ENCODE measurements at regions of chr19 and their contacts with region 1.

Region 1: GRCh38 chr19:57362997-57363705 is at the starts of genes TRAPPC2B and ZNF547:
- DNase-seq: peak; percentile 98
- H3K4me3 Mint-ChIP-seq: peak within 1 kb of the TSS; percentile 82
- H3K27ac Mint-ChIP-seq: peak within 1 kb of the TSS; percentile 96
- H3K4me1 Mint-ChIP-seq: peaks cover 12% of the 10 kb centered on the region
- H3K27me3 Mint-ChIP-seq: no peaks in the 10 kb centered on the region
- total RNA-seq, gene TRAPPC2B: 3.8 and 4.1 TPM in 2 replicates
- total RNA-seq, gene ZNF547: 1.3 and 2.0 TPM in 2 replicates

Region 2: DNA sequence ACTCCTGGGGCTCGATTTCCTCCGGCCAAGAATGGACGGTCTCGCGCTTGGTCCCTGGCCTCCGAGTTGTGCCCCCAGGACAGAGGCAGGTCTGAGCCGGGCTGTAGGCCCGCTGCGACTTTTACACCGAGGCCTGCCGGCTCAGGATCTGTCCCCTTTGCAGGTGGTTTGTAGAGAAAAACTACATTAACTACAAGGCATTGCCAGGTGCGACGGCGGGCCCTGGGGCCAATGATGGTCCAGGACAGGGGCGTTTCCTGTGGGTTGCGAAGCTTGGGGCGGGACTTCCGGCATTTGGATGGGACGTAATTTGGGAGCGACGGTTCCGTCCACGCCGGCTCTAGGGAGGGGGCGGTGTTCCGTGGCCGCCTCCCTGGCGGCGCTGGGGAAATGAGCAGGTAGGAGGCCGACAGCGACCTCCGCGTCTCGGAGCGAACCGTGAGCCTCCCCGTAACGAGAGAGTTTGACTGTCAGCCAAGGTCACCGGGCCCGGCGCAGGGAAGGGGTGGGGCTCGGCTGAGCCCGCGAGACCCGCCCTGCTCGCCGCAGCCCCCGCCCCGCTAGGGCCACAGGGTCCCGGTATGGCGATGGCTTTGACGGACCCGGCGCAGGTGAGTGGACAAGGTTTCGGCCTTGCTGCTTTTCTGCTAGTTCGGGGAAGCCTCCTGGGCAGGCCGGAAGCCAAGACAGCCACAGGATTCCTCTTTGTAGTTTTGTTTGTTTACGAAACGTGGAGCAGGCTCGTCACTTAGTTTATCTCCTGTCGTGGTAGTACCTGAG is 122.7 kb before region 1 on chr19 and contains the start of gene ZNF805:
- intact Hi-C with region 1: loop called (anchors 1 kb)
- DNase-seq: peak; percentile 93
- H3K4me3 Mint-ChIP-seq: peak within 1 kb of the TSS; percentile 92
- H3K27ac Mint-ChIP-seq: peak within 1 kb of the TSS; percentile 90
- H3K4me1 Mint-ChIP-seq: peaks cover 16% of the 10 kb centered on the region
- H3K27me3 Mint-ChIP-seq: no peaks in the 10 kb centered on the region
- total RNA-seq, gene ZNF805: 6.6 and 6.9 TPM in 2 replicates

Region 3: DNA sequence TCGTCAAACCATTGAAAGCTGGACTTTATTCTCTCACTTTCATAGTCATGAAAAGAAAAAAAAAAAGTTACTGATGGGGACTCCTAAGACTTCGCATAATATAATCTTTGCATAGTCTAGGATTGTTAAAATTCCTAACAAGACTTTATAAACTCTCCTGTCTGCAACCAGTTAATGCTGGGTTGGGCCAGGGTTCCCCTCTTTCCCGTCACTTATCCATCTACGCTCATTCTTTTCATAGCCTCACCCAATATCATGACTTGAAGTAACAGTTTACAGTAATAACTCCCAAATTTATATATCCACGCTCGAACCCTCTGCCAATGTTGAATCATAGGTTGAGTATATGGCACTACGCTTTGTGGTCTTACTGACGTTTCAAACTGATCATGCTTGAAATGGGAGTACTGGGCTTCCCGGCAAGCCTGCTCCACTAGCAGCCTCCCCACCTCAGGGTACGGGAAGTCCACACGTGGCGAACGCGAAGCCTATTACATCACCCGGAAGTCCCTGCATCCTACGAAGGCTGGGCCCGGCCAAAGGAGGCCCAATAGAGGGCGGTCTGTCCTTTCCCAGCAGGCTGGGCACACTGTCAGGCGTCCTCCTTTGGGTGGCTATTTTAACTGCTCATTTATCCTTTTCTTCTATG is 83.6 kb before region 1 on chr19:
- intact Hi-C with region 1: loop called (anchors 1 kb)
- DNase-seq: peak; percentile 73
- H3K4me3 Mint-ChIP-seq: peak overlapping the region; percentile 15
- H3K27ac Mint-ChIP-seq: no peak overlapping the region
- H3K4me1 Mint-ChIP-seq: peaks cover 21% of the 10 kb centered on the region
- H3K27me3 Mint-ChIP-seq: no peaks in the 10 kb centered on the region

Region 4: DNA sequence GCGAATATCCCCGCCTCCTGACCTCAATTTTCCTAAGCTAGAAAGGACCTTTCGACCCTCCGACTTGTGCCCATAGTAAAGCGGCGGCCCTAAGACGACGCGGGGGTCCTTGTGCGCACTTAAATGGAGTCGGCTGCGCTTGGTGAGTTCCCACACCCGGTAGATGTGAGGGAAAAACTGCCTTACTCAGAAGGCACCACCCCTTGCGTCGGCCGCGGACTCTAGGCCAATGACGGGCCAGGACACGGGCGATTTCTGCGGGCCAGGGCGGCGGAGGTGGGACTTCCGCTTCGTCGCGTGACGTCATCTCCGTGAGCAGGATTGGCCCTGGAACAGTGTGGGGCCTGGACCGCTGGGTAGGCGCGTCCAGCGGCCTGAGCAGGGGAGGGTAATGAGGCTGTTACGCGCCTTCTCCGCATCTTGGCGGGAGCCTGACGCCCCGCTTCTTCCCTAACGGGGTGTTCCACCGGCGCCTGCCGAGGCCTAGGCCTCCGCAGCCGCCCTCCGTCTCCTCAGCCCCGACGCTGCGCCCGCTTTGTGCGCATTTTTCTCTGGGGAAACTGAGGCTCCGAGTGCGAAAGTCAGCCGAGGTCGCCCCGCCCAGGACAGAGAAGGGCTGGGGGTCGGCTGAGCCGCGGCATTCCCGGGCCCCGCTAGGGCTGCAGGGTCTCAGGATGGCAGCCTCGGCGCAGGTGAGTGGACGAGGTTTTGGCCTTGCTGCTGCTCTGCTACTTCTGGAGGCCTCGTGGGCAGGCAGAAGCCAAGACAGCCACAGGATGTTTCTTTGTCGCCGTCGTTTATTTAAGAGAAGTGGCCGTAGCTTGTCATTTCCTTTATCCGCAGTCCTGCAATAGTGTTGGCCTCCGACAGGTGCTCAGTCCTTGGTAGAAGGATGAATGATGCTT is 42.7 kb before region 1 on chr19 and contains the start of gene ZNF543:
- intact Hi-C with region 1: loop called (anchors 2 kb)
- DNase-seq: peak; percentile 89
- H3K4me3 Mint-ChIP-seq: peak within 1 kb of the TSS; percentile 85
- H3K27ac Mint-ChIP-seq: peak within 1 kb of the TSS; percentile 91
- H3K4me1 Mint-ChIP-seq: peaks cover 25% of the 10 kb centered on the region
- H3K27me3 Mint-ChIP-seq: peaks cover 11% of the 10 kb centered on the region
- total RNA-seq, gene ZNF543: 4.6 and 5.1 TPM in 2 replicates

Region 5: GRCh38 chr19:57334191-57334590 is 29.0 kb before region 1 on chr19:
- intact Hi-C with region 1: no loop called
- DNase-seq: no peak
- H3K4me3 Mint-ChIP-seq: no peak overlapping the region
- H3K27ac Mint-ChIP-seq: no peak overlapping the region
- H3K4me1 Mint-ChIP-seq: no peaks in the 10 kb centered on the region
- H3K27me3 Mint-ChIP-seq: no peaks in the 10 kb centered on the region

Region 6: GRCh38 chr19:57350877-57351805 is 12.0 kb before region 1 on chr19 and contains the start of gene ZNF304:
- intact Hi-C with region 1: loop called (anchors 1 kb)
- DNase-seq: peak; percentile 83
- H3K4me3 Mint-ChIP-seq: peak within 1 kb of the TSS; percentile 92
- H3K27ac Mint-ChIP-seq: peak within 1 kb of the TSS; percentile 86
- H3K4me1 Mint-ChIP-seq: peaks cover 25% of the 10 kb centered on the region
- H3K27me3 Mint-ChIP-seq: no peaks in the 10 kb centered on the region
- total RNA-seq, gene ZNF304: 5.2 and 6.5 TPM in 2 replicates

Region 7: DNA sequence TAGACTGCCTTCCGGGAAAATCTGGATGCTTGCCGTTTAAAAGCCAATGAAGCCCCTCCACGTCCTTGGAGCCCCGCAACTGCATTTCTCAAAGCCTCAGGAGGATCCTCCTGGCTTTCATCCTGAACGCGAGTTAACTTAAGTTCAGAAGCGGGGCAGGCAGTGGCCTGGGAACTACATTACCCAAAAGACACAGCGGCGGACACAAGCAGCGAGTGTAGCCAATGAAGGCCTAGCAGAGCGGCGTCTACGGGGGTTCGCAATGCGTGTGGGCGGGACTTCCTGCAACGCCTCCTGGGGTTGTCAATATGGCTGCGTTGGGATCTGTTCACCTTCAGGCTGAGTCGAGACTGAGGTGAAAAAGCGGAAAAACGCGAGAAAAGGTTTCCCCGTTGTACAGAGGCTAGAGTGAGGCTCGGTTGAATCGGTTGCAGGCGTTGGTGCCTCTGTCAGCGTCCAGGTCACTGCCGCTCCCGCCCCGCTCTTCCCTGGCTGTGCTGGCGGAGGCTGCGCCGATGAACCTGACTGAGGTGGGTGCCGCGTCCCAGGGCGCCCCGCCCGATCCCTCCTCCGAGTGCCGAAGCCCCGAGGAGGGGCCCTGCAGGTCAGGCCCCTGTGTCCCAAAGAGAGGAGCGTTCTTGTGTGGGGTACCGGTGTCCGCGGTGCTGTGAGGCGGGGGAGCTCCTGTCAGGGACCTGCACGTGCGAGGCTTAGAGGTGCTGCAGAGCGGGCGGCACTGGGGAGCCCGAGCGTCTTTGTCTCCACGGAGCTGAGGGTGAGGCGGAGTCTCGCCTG is 47.9 kb after region 1 on chr19 and contains the start of gene ZNF17:
- intact Hi-C with region 1: loop called (anchors 1 kb)
- DNase-seq: peak; percentile 88
- H3K4me3 Mint-ChIP-seq: peak within 1 kb of the TSS; percentile 92
- H3K27ac Mint-ChIP-seq: peak within 1 kb of the TSS; percentile 63
- H3K4me1 Mint-ChIP-seq: peaks cover 11% of the 10 kb centered on the region
- H3K27me3 Mint-ChIP-seq: no peaks in the 10 kb centered on the region
- total RNA-seq, gene ZNF17: 7.7 and 9.3 TPM in 2 replicates

Region 8: GRCh38 chr19:57435062-57435978 is 72.2 kb after region 1 on chr19 and contains the start of gene ZNF749:
- intact Hi-C with region 1: loop called (anchors 1 kb)
- DNase-seq: peak; percentile 96
- H3K4me3 Mint-ChIP-seq: peak within 1 kb of the TSS; percentile 98
- H3K27ac Mint-ChIP-seq: peak within 1 kb of the TSS; percentile 96
- H3K4me1 Mint-ChIP-seq: peaks cover 16% of the 10 kb centered on the region
- H3K27me3 Mint-ChIP-seq: no peaks in the 10 kb centered on the region
- total RNA-seq, gene ZNF749: 21.0 and 21.5 TPM in 2 replicates

Measured in activated T-helper 2 cell treated with anti-CD3 and anti-CD28 coated beads, Interferon-gamma antibody, Interleukin-2, Interleukin-4, amounts not matched to agents 10 μg/mL and 5 μg/mL and 100 μg/mL, durations not matched to agents 14 hours and 24 hours and 36 hours (primary cell).